ENCODE measurements at regions of chr11 and their contacts with region 1.

Region 1: GRCh38 chr11:126115816-126116331 is 53.2 kb upstream of the CDON start:
- DNase-seq: peak; percentile 65
- H3K4me3 Mint-ChIP-seq: peak overlapping the region; percentile 21
- H3K27ac Mint-ChIP-seq: peak overlapping the region; percentile 35
- H3K4me1 Mint-ChIP-seq: peaks cover 16% of the 10 kb centered on the region
- H3K27me3 Mint-ChIP-seq: no peaks in the 10 kb centered on the region
- CTCF ChIP-seq: no peak

Region 2: GRCh38 chr11:126072141-126072741 is 43.6 kb before region 1 on chr11:
- CTCF ChIA-PET with region 1: interaction called, 3 read pairs
- intact Hi-C with region 1: loop called (anchors 5 kb)
- DNase-seq: peak; percentile 33
- H3K4me3 Mint-ChIP-seq: peak overlapping the region; percentile 14
- H3K27ac Mint-ChIP-seq: peak overlapping the region; percentile 73
- H3K4me1 Mint-ChIP-seq: peaks cover 23% of the 10 kb centered on the region
- H3K27me3 Mint-ChIP-seq: no peaks in the 10 kb centered on the region
- CTCF ChIP-seq: no peak